ENCODE measurements at regions of chr2 and their contacts with region 1.

Region 1: GRCh38 chr2:71143782-71144181 is 13.3 kb downstream of the MPHOSPH10 start:
- DNase-seq: no peak
- ATAC-seq: no peak
- H3K4me3 ChIP-seq: no peak overlapping the region
- H3K27ac ChIP-seq: no peak overlapping the region
- H3K4me1 ChIP-seq: no peaks in the 10 kb centered on the region
- H3K27me3 ChIP-seq: no peaks in the 10 kb centered on the region
- CTCF ChIP-seq: no peak

Region 2: GRCh38 chr2:70828914-70829824 is 314.6 kb before region 1 on chr2:
- CTCF ChIA-PET with region 1: no interaction called
- POLR2A ChIA-PET with region 1: no interaction called
- intact Hi-C with region 1: no loop called
- DNase-seq: no peak
- ATAC-seq: no peak
- H3K4me3 ChIP-seq: no peak overlapping the region
- H3K27ac ChIP-seq: no peak overlapping the region
- H3K4me1 ChIP-seq: no peaks in the 10 kb centered on the region
- H3K27me3 ChIP-seq: peaks cover 64% of the 10 kb centered on the region
- CTCF ChIP-seq: no peak

Region 3: GRCh38 chr2:71524476-71524875 is 380.7 kb after region 1 on chr2:
- CTCF ChIA-PET with region 1: no interaction called
- POLR2A ChIA-PET with region 1: interaction called, 13 read pairs
- intact Hi-C with region 1: no loop called
- DNase-seq: no peak
- ATAC-seq: no peak
- H3K4me3 ChIP-seq: no peak overlapping the region
- H3K27ac ChIP-seq: no peak overlapping the region
- H3K4me1 ChIP-seq: no peaks in the 10 kb centered on the region
- H3K27me3 ChIP-seq: no peaks in the 10 kb centered on the region
- CTCF ChIP-seq: no peak